Endothelial cell of umbilical vein (primary cell): ENCODE measurements at regions of chr3 and their contacts with region 1.

Region 1: DNA sequence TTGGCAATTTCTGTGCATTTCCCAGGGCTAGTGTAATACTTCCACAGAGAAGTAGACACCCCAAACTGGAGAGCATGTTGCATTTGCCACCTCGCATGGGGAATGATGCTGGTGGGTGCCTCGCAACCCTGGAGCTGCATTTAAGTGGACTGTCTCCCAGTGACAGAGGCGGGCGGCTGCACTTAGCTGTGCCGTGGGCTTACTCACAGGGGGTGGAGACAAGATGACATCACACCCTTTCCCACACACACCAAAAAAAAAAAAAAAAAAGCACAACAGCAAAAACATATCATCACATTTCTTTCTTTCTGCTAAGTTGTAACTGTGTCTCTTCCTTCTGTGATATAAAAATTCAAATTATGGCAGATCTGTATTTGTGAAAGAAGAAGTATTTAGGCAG is at the start of gene ABI3BP:
- DNase-seq: peak; percentile 91
- H3K4me3 ChIP-seq: peak within 1 kb of the TSS; percentile 63 to 90 (median 77)
- H3K27ac ChIP-seq: peak within 1 kb of the TSS; percentile 51
- H3K4me1 ChIP-seq: peaks cover 14% of the 10 kb centered on the region
- H3K27me3 ChIP-seq: no peaks in the 10 kb centered on the region
- CTCF ChIP-seq: no peak
- POLR2A ChIP-seq: peak; percentile 74
- total RNA-seq, gene ABI3BP: 55.9 and 78.1 TPM in 2 replicates

Region 2: DNA sequence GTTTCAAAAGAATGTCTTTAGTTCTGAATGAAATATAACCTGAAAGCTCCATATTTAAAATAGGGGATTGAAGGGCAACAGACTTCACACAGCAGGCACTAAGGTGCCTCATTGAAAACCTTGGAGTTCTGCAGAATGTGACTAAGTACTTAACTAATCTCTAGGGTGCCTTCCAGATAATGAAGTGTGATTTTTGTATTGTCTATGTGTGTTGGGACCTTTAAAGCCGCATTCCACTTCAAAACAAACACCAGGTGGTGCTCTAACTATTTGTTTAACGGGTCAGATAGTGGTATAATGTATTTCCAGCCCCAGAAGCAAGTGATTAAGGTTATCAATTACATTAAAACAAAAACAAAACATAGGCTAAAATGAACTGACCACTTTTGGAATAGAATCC is 256.0 kb before region 1 on chr3:
- CTCF ChIA-PET with region 1: no interaction called
- POLR2A ChIA-PET with region 1: no interaction called
- dilution Hi-C with region 1: no loop called
- intact Hi-C with region 1: loop called (anchors 10 kb)
- DNase-seq: peak; percentile 48
- H3K4me3 ChIP-seq: no peak overlapping the region
- H3K27ac ChIP-seq: no peak overlapping the region
- H3K4me1 ChIP-seq: no peaks in the 10 kb centered on the region
- H3K27me3 ChIP-seq: no peaks in the 10 kb centered on the region
- CTCF ChIP-seq: peak; percentile 19 to 36
- POLR2A ChIP-seq: no peak

Region 3: GRCh38 chr3:100899440-100900091 is 93.7 kb before region 1 on chr3:
- CTCF ChIA-PET with region 1: interaction called, 5 read pairs
- POLR2A ChIA-PET with region 1: no interaction called
- dilution Hi-C with region 1: no loop called
- intact Hi-C with region 1: loop called (anchors 2 kb)
- DNase-seq: peak; percentile 92
- H3K4me3 ChIP-seq: peak overlapping the region in 1 of 3 experiments; percentile 38
- H3K27ac ChIP-seq: peak overlapping the region; percentile 84
- H3K4me1 ChIP-seq: peaks cover 61% of the 10 kb centered on the region
- H3K27me3 ChIP-seq: no peaks in the 10 kb centered on the region
- CTCF ChIP-seq: no peak
- POLR2A ChIP-seq: peak; percentile 19

Region 4: GRCh38 chr3:100982710-100983109 is 10.6 kb before region 1 on chr3:
- CTCF ChIA-PET with region 1: interaction called, 19 read pairs
- POLR2A ChIA-PET with region 1: no interaction called
- dilution Hi-C with region 1: no loop called
- intact Hi-C with region 1: loop called (anchors 1 kb)
- DNase-seq: peak; percentile 81
- H3K4me3 ChIP-seq: no peak overlapping the region
- H3K27ac ChIP-seq: no peak overlapping the region
- H3K4me1 ChIP-seq: peaks cover 3% of the 10 kb centered on the region
- H3K27me3 ChIP-seq: no peaks in the 10 kb centered on the region
- CTCF ChIP-seq: no peak
- POLR2A ChIP-seq: no peak

Region 5: DNA sequence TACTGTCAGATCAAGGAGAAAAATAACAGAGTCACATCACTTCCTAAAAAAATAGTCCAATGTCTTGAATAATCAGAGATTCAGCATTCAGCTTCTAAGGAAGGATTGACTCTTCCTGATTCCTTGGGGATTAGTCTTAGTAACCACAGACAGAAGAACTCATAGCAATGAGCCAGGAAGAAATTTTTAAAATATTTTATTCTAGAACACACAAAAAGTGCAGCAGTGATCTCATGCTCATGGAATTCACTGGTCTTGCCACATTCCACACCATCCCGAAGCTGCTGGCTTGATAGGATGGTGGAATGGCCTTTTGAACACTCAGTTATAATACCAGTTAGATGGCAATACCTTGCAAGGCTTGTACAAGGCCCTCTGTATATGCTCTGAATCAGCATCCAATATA is 42.9 kb after region 1 on chr3:
- CTCF ChIA-PET with region 1: no interaction called
- POLR2A ChIA-PET with region 1: no interaction called
- dilution Hi-C with region 1: no loop called
- intact Hi-C with region 1: loop called (anchors 2 kb)
- DNase-seq: peak; percentile 84
- H3K4me3 ChIP-seq: no peak overlapping the region
- H3K27ac ChIP-seq: peak overlapping the region; percentile 79
- H3K4me1 ChIP-seq: peaks cover 18% of the 10 kb centered on the region
- H3K27me3 ChIP-seq: no peaks in the 10 kb centered on the region
- CTCF ChIP-seq: no peak
- POLR2A ChIP-seq: peak; percentile 52

Region 6: DNA sequence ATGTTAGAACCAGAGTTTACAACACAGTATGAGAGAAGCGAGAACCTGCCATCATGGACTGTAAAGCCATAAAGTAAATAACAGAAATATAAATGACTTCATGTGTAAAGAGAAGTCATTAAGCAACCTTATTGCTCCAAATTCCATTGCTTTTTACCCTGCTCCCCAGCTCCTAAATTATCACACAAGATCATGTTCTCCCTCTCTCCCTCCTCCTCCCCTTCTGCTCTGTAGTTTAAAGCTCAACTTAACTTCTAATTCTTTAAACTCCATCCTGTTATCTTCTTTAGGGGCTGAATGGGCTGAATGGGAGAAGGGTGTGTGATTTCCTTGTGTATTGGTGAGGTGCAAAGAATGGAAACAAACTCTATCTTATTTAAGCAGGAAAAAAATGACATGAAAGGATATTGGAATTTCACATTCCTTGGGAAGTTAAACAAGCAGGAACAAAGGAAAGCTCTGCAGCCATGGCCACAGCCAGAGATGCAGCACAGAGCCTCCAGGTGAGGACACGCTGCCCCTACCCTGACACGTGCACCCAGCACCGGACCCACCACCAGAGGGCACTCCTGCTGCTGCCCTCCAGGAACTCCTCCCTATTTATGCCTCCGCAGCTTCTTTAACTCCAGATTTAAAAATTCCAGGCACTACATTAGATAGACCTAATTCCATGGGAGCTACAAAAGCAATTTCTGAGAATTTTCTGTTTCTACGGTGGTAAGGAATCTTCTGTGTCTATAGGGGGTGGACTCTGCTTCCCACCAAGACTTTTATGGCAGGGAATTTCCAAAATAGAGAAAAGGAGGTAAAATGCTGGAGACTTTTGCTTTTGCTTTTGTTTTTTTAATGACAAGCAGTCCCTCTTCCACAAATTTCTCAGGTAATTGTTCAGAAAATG is 76.8 kb after region 1 on chr3:
- CTCF ChIA-PET with region 1: interaction called, 5 read pairs
- POLR2A ChIA-PET with region 1: no interaction called
- dilution Hi-C with region 1: no loop called
- intact Hi-C with region 1: loop called (anchors 2 kb)
- DNase-seq: peak; percentile 46
- H3K4me3 ChIP-seq: no peak overlapping the region
- H3K27ac ChIP-seq: peak overlapping the region; percentile 88
- H3K4me1 ChIP-seq: peaks cover 67% of the 10 kb centered on the region
- H3K27me3 ChIP-seq: no peaks in the 10 kb centered on the region
- CTCF ChIP-seq: peak; percentile 55 to 72
- POLR2A ChIP-seq: no peak